Activated B cell treated with CpG ODN at 0.5 μM for 24 hours (primary cell): ENCODE measurements at regions of chr9 and their contacts with region 1.

Region 1: DNA sequence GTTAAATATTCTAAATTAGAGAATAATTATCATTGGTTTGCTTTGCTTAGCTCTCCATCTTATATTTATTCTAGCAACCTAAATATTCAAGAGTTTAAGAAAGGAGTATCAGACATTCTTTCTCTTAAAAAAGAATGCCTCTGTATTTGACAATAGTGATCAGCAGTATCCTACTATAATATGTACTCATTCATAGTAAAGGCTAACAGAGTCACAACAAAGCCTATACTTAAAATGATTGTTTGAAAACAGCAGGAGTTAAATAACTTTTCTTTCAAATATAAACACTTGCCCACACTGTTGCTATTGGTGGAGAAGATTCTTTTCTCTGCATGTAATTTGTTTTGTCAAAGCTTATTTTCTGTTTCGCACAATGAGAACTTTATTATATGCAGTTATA is 178.4 kb downstream of the PTPRD start:
- DNase-seq: no peak
- ATAC-seq: no peak
- H3K4me3 Mint-ChIP-seq: no peak overlapping the region
- H3K27ac Mint-ChIP-seq: no peak overlapping the region
- H3K4me1 Mint-ChIP-seq: no peaks in the 10 kb centered on the region
- H3K27me3 Mint-ChIP-seq: no peaks in the 10 kb centered on the region
- CTCF ChIP-seq: no peak

Region 2: GRCh38 chr9:10371824-10372223 is 62.6 kb before region 1 on chr9:
- CTCF ChIA-PET with region 1: no interaction called
- POLR2A ChIA-PET with region 1: no interaction called
- intact Hi-C with region 1: loop called (anchors 5 kb)
- DNase-seq: no peak
- ATAC-seq: no peak
- H3K4me3 Mint-ChIP-seq: no peak overlapping the region
- H3K27ac Mint-ChIP-seq: no peak overlapping the region
- H3K4me1 Mint-ChIP-seq: no peaks in the 10 kb centered on the region
- H3K27me3 Mint-ChIP-seq: no peaks in the 10 kb centered on the region
- CTCF ChIP-seq: no peak